HCT116 (cell line): ENCODE measurements at regions of chr3 and their contacts with region 1.

Region 1: DNA sequence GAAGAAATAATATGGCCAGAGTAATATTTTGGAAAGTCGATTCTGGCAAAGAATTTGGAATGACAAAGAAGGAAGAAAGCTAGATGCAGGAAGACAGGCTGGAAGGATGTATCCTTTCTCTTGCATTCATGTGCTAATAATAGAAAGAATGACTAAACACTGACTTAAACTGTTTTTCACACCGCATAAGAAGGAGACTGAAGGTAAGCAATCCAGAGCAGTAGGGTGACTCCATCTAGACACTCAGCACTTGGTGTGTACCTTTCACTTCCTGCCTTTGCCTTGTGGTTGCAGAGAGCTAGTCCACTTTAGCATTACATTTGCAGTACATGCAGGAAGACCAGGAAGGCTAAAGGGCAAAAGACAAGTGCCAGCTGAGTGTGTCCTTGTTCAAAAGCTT is 234.6 kb downstream of the RBMS3 start:
- DNase-seq: no peak
- ATAC-seq: no peak
- H3K4me3 ChIP-seq: no peak overlapping the region
- H3K27ac ChIP-seq: no peak overlapping the region
- H3K4me1 ChIP-seq: no peaks in the 10 kb centered on the region
- H3K27me3 ChIP-seq: peaks cover 9% of the 10 kb centered on the region; the same call in 1 of the 2 replicates
- CTCF ChIP-seq: no peak
- POLR2A ChIP-seq: no peak
- RAD21 ChIP-seq: no peak

Region 2: GRCh38 chr3:29463304-29463703 is 52.1 kb before region 1 on chr3:
- CTCF ChIA-PET with region 1: no interaction called
- POLR2A ChIA-PET with region 1: no interaction called
- RAD21 ChIA-PET with region 1: no interaction called
- intact Hi-C with region 1: loop called (anchors 5 kb)
- DNase-seq: no peak
- ATAC-seq: no peak
- H3K4me3 ChIP-seq: no peak overlapping the region
- H3K27ac ChIP-seq: no peak overlapping the region
- H3K4me1 ChIP-seq: no peaks in the 10 kb centered on the region
- H3K27me3 ChIP-seq: no peaks in the 10 kb centered on the region
- CTCF ChIP-seq: no peak
- POLR2A ChIP-seq: no peak
- RAD21 ChIP-seq: no peak